ENCODE measurements at regions of chr2 and their contacts with region 1.

Region 1: DNA sequence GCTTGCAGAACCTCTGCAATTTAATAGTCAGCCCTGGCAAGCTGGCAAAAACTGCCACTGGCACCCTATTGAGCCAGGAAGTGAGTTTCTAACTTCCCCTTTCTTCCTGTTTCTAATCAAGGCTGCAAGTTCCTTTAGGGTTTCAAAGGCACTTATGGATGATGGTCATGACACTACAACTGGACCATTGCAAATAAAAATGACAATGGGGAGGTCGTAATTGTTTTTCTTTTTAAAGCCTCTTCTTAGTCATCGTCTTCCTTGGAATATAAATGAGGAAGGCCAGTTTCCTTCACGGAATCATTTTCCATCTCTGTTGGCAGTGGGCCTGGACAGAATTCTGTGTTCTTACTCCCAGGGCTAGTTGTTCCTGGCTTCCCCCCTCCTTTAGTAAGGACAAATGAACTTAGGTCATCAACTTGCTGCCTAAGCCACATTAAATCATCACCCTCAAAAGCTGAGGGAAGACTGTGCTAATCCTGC is 35.8 kb downstream of the SH3RF3 start:
- DNase-seq: no peak
- ATAC-seq: no peak; the same call in 2 of the 3 replicates
- H3K4me3 ChIP-seq: no peak overlapping the region
- H3K27ac ChIP-seq: no peak overlapping the region
- H3K4me1 ChIP-seq: no peaks in the 10 kb centered on the region
- H3K27me3 ChIP-seq: no peaks in the 10 kb centered on the region
- CTCF ChIP-seq: no peak
- EP300 ChIP-seq: no peak
- POLR2A ChIP-seq: no peak
- RAD21 ChIP-seq: no peak

Region 2: DNA sequence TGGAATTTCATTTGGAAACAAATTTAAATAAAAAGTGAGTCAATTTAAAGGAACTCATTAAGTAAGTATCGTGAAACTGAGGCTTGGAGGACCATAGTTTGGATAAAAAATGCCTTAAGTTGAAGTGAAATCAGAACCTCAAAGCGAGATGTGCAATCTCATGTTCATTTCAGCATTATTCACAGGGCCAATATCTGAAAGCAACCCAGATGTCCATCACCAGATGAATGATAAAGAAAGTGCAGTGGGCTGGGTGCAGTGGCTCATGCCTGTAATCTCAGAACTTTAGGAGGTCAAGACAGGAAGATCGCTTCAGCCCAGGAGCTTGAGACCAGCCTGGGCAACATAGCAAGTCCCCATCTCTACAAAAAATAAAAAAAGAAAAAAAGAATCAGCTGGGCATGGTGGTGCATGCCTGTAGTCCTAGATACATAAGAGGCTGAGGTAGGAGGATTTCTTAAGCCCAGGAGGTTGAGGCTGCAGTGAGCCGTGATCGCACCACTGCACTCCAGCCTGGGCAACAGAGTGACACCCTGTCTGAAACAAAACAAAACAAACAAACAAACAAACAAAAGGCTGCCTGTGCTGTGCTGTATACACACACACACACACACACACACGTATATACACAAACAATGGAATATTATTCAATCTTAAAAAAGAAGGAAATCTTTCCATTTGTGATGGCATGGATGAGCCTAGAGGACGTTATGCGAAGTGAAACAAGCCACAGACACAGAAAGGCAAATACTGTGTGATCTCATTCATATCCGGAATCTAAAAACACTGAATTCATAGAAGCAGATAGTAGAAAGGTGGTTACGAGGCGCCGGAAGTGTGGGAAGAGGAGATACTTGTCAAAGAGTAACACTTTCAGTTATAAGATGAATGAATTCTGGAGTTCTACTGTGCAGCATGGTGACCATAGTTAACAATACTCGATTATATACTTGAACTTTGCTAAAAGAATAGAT is 21.3 kb before region 1 on chr2:
- CTCF ChIA-PET with region 1: no interaction called
- POLR2A ChIA-PET with region 1: no interaction called
- RAD21 ChIA-PET with region 1: no interaction called
- SMC1A ChIA-PET with region 1: interaction called, 11 read pairs
- in situ Hi-C with region 1: no loop called
- intact Hi-C with region 1: no loop called
- DNase-seq: peak; percentile 66
- ATAC-seq: peak; percentile 92
- H3K4me3 ChIP-seq: peak overlapping the region; percentile 38; the same call in 1 of the 2 replicates
- H3K27ac ChIP-seq: no peak overlapping the region; the same call in 1 of the 2 replicates
- H3K4me1 ChIP-seq: peaks cover 27% of the 10 kb centered on the region
- H3K27me3 ChIP-seq: peaks cover 0 to 3% of the 10 kb centered on the region in 2 experiments; a peak in 2 of 4 replicates
- CTCF ChIP-seq: no peak
- EP300 ChIP-seq: peak; percentile 56 to 80; a peak in 3 of 4 replicates
- POLR2A ChIP-seq: no peak
- RAD21 ChIP-seq: 0 out of 2 replicates have a peak, but pooled peaks have one; percentile 5

Region 3: DNA sequence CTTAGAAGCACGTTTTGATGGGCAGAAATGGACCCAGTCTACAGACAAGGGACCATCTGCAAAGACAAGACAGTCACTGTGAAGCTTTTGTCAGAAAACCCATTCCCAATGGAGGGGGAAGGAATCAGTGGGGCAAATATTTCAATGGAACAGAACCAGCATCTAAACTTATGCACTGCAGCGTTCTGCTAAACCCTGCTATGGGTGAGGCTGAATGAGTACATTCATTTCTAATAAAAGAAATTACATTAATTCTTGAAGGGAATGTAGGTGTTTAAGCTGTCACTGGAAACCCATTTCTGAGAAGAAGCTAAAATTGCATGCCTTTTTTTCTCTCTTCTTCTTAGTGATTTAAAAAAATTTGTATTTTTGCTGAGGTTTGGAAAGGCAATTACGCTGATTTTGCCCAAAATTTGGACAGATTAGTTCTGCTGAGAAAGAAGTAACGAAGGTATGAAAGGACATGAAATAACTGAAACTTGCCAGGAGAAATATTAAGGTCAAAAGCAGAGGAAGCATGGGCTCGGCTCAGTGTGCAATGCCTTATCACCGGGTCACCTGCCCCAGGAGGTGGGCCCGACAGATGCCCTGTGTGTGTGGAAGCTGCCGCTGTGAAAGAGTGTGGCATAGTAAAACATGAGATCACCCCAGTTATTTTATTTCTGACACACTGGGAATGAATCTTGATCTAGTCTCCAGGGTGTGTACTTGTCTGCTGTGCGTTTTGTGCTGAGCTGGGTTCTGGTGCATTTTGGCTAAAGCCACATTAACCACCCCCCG is 11.6 kb before region 1 on chr2:
- CTCF ChIA-PET with region 1: interaction called, 11 read pairs
- POLR2A ChIA-PET with region 1: no interaction called
- RAD21 ChIA-PET with region 1: no interaction called
- SMC1A ChIA-PET with region 1: interaction called, 11 read pairs
- in situ Hi-C with region 1: no loop called
- intact Hi-C with region 1: no loop called
- DNase-seq: no peak
- ATAC-seq: no peak
- H3K4me3 ChIP-seq: no peak overlapping the region
- H3K27ac ChIP-seq: no peak overlapping the region
- H3K4me1 ChIP-seq: peaks cover 10% of the 10 kb centered on the region; the same call in 1 of the 2 replicates
- H3K27me3 ChIP-seq: no peaks in the 10 kb centered on the region
- CTCF ChIP-seq: no peak
- EP300 ChIP-seq: no peak
- POLR2A ChIP-seq: no peak
- RAD21 ChIP-seq: no peak

Region 4: DNA sequence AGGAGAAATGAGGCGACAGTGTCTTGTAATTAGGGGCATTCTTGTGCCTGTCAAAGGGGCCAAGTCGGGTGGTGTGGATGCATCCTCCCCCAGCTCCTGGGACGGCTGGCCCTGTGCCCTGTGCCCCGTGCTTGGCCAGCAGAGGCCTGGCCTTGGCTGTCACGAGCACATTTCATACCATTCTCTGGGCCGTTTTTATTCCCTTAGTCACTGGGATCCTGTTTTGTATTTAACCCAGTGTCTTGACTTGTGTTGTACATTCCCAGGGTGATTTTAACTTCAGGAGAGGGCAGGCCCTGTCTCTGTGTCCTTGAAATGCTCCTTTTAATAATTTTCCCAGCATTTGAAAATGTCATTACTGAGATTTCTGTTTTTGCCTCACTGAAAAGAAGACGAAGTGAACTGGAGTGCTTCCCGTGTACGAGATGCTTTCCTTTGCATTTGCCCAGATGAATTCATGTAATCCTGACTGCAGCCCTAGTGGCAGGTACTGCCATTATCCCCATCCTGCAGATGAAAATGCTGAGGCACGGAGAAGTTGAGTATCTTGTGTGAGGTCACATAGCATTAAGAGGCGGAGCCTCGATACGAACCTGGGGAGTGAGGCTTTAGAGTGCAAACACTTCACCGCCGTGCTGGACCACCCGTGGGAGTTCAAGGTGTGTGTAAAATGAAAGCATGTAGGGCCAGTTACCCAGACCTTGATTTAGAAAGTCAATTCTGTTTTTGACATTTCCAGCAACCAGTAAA is 21.2 kb after region 1 on chr2:
- CTCF ChIA-PET with region 1: no interaction called
- POLR2A ChIA-PET with region 1: no interaction called
- RAD21 ChIA-PET with region 1: interaction called, 3 read pairs
- SMC1A ChIA-PET with region 1: interaction called, 5 read pairs
- in situ Hi-C with region 1: no loop called
- intact Hi-C with region 1: loop called (anchors 1 kb)
- DNase-seq: no peak
- ATAC-seq: no peak
- H3K4me3 ChIP-seq: no peak overlapping the region
- H3K27ac ChIP-seq: no peak overlapping the region
- H3K4me1 ChIP-seq: no peaks in the 10 kb centered on the region
- H3K27me3 ChIP-seq: no peaks in the 10 kb centered on the region
- CTCF ChIP-seq: no peak
- EP300 ChIP-seq: no peak
- POLR2A ChIP-seq: no peak
- RAD21 ChIP-seq: no peak

Region 5: DNA sequence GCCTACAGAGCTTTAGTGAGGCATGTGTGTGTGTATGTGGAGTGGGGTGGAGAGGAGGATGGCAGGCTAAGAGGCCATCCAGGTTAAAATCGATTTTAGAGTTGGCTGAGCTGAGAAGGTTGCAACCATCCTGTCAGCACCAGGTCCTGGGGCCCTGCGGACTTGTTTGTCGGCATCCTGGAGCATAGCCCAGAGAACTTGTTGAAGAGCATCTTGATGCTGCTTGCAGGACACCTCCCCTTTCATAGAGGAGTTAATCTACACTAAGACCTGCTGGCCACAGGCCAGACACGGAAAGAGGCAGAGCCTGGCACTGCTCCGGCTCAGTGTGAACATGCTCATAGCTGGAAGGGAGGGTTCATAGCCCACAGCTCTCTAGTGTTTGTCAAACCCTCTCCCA is 557.2 kb after region 1 on chr2:
- CTCF ChIA-PET with region 1: no interaction called
- POLR2A ChIA-PET with region 1: no interaction called
- RAD21 ChIA-PET with region 1: no interaction called
- SMC1A ChIA-PET with region 1: no interaction called
- in situ Hi-C with region 1: no loop called
- intact Hi-C with region 1: no loop called
- DNase-seq: no peak
- ATAC-seq: no peak
- H3K4me3 ChIP-seq: no peak overlapping the region
- H3K27ac ChIP-seq: no peak overlapping the region
- H3K4me1 ChIP-seq: peaks cover 5% of the 10 kb centered on the region; the same call in 1 of the 2 replicates
- H3K27me3 ChIP-seq: no peaks in the 10 kb centered on the region
- CTCF ChIP-seq: no peak
- EP300 ChIP-seq: no peak
- POLR2A ChIP-seq: no peak
- RAD21 ChIP-seq: no peak